ENCODE measurements at regions of chr19 and their contacts with region 1.

Region 1: DNA sequence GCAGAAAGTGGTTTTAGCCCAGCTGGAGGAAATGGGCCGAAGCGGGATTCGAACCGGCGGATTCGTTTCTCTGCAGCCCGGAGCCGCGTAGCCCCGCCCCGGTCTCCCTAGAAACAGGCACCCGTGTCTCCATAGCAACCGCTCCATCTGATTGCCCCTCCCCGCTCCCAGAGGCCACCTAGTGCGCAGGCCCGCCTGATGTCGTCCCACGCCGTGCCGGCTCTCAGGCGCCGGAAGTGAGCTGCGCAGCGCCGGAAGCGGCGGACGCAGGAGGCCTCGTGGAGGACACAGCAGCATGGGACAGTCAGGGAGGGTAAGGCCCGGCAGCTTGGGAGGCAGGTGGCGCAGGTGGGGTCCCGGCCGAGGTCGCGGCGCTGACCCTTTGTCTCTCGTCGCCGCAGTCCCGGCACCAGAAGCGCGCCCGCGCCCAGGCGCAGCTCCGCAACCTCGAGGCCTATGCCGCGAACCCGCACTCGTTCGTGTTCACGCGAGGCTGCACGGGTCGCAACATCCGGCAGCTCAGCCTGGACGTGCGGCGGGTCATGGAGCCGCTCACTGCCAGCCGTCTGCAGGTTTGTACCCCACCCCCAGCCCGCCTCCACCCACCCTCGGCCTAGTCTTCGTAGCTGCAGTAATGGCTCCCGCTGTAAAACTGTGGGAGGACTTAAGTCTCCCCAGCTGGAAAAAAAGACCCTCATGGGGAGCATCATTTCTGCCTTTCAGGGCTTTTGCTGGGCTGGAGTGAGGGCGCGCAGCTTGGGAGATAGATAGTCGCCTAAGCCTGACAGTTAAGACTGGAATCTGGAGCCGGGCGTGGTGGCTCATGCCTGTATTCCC is at the start of gene PPAN:
- DNase-seq: peak; percentile 93
- ATAC-seq: peak; percentile 61
- H3K4me3 ChIP-seq: peak within 1 kb of the TSS; percentile 79
- H3K27ac ChIP-seq: peak within 1 kb of the TSS; percentile 100
- H3K4me1 ChIP-seq: peaks cover 54% of the 10 kb centered on the region
- H3K27me3 ChIP-seq: no peaks in the 10 kb centered on the region
- CTCF ChIP-seq: no peak
- EP300 ChIP-seq: no peak
- POLR2A ChIP-seq: peak; percentile 95
- RAD21 ChIP-seq: no peak
- polyA plus RNA-seq, gene PPAN: 2.1 to 7.6 TPM

Region 2: GRCh38 chr19:10061717-10062310 is 44.5 kb before region 1 on chr19:
- CTCF ChIA-PET with region 1: no interaction called
- POLR2A ChIA-PET with region 1: no interaction called
- RAD21 ChIA-PET with region 1: no interaction called
- SMC1A ChIA-PET with region 1: no interaction called
- in situ Hi-C with region 1: no loop called
- intact Hi-C with region 1: no loop called
- DNase-seq: no peak
- ATAC-seq: no peak
- H3K4me3 ChIP-seq: no peak overlapping the region
- H3K27ac ChIP-seq: no peak overlapping the region
- H3K4me1 ChIP-seq: no peaks in the 10 kb centered on the region
- H3K27me3 ChIP-seq: no peaks in the 10 kb centered on the region; a peak in 1 of 4 replicates
- CTCF ChIP-seq: no peak
- EP300 ChIP-seq: no peak
- POLR2A ChIP-seq: no peak
- RAD21 ChIP-seq: no peak

Region 3: DNA sequence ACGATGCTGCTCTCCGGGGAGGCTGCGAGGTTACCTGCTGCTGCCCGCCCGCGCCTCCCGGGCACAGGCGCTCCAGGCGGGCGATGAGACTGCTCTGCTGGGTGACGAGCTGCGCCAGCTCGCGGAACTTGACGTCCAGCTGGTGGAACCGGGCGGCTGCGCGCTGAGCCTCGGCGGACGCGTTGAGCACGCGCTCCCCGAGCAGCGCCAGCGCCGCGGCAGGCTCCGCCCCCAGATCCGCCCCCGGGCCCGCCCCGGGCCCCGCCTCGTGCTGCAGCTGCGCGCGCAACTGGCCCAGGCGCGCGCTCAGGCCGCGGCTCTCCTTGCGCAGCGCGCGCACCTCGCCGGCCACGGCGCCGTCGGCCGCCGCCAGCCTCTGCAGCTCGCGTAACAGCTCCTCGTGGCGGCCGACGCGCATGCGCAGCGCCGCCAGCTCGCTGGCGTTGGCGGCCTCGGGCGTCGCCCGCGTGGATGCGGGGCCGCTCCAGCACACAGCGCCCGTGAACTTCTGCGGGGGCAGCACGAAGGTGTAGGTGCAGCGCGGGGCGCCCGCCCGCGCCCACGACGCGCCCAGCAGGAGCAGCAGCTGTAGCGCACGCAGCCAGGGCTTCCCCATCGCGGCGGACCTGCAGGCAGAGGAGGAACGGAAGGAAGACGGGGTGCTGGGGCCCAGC is 10.2 kb before region 1 on chr19:
- CTCF ChIA-PET with region 1: interaction called, 171 read pairs
- POLR2A ChIA-PET with region 1: interaction called, 58 read pairs
- RAD21 ChIA-PET with region 1: interaction called, 166 read pairs
- SMC1A ChIA-PET with region 1: interaction called, 150 read pairs
- in situ Hi-C with region 1: no loop called
- intact Hi-C with region 1: no loop called
- DNase-seq: no peak
- ATAC-seq: peak; percentile 81
- H3K4me3 ChIP-seq: peak overlapping the region; percentile 21; the same call in 1 of the 2 replicates
- H3K27ac ChIP-seq: peak overlapping the region; percentile 70
- H3K4me1 ChIP-seq: peaks cover 35% of the 10 kb centered on the region
- H3K27me3 ChIP-seq: no peaks in the 10 kb centered on the region
- CTCF ChIP-seq: no peak
- EP300 ChIP-seq: no peak
- POLR2A ChIP-seq: peak; percentile 81
- RAD21 ChIP-seq: no peak

Region 4: DNA sequence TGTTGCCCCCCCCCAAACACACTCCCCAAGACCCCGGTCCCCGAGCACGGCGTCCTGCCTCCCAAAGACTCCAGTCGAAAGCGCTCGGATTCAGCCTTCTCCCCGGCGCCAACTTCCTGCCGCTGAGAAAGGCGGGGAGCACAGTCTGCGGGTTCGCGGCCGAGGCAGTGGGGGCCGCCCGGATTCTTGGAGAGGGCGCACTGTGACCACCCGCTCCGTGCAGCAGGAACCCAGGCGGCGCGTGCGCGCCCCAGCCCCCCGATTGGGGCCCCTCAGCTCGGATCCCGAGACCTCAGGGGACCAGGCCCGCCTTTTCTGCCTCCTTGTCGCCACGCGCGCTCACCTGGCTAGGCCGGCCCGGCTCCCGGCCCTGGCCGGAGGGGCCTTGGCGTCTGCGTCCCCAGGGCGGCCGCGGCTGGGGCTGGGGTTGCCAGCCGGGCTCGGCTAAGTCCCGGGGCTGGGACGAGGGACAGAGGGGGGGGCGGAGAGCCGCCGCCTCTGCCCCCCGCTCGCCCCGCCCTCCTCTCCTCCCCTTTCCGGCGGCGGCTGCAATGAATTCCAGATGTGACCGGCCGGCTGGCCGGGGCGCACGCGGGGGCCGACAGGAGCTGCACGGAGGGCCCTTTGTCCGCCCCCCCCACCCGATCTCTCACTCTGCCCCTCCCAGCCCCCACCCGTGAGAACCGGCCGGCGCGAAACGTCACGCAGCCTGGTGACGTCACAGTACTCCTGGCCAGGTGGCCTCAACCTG is 124.7 kb after region 1 on chr19 and contains the start of gene S1PR2:
- CTCF ChIA-PET with region 1: interaction called, 5 read pairs
- POLR2A ChIA-PET with region 1: interaction called, 43 read pairs
- RAD21 ChIA-PET with region 1: interaction called, 42 read pairs
- SMC1A ChIA-PET with region 1: interaction called, 22 read pairs
- in situ Hi-C with region 1: loop called (anchors 5 kb)
- intact Hi-C with region 1: loop called (anchors 2 kb)
- DNase-seq: no peak
- ATAC-seq: peak; percentile 67
- H3K4me3 ChIP-seq: peak within 1 kb of the TSS; percentile 90
- H3K27ac ChIP-seq: peak within 1 kb of the TSS; percentile 97
- H3K4me1 ChIP-seq: peaks cover 44% of the 10 kb centered on the region
- H3K27me3 ChIP-seq: no peaks in the 10 kb centered on the region
- CTCF ChIP-seq: 0 out of 6 replicates have a peak, but pooled peaks of 1 of the 3 experiments have one; percentile 19
- EP300 ChIP-seq: no peak
- POLR2A ChIP-seq: peak; percentile 81
- RAD21 ChIP-seq: no peak
- polyA plus RNA-seq, gene S1PR2: 4.9 to 9.6 TPM

Region 5: GRCh38 chr19:10238172-10238783 is 132.0 kb after region 1 on chr19:
- CTCF ChIA-PET with region 1: interaction called, 5 read pairs
- POLR2A ChIA-PET with region 1: interaction called, 43 read pairs
- RAD21 ChIA-PET with region 1: interaction called, 42 read pairs
- SMC1A ChIA-PET with region 1: interaction called, 22 read pairs
- in situ Hi-C with region 1: loop called (anchors 5 kb)
- intact Hi-C with region 1: loop called (anchors 2 kb)
- DNase-seq: no peak
- ATAC-seq: peak; percentile 47
- H3K4me3 ChIP-seq: no peak overlapping the region
- H3K27ac ChIP-seq: peak overlapping the region; percentile 54
- H3K4me1 ChIP-seq: peaks cover 57% of the 10 kb centered on the region
- H3K27me3 ChIP-seq: no peaks in the 10 kb centered on the region
- CTCF ChIP-seq: no peak
- EP300 ChIP-seq: no peak
- POLR2A ChIP-seq: no peak
- RAD21 ChIP-seq: no peak

Region 6: GRCh38 chr19:10245189-10245939 is 139.0 kb after region 1 on chr19:
- CTCF ChIA-PET with region 1: interaction called, 39 read pairs
- POLR2A ChIA-PET with region 1: interaction called, 25 read pairs
- RAD21 ChIA-PET with region 1: interaction called, 12 read pairs
- SMC1A ChIA-PET with region 1: interaction called, 10 read pairs
- in situ Hi-C with region 1: no loop called
- intact Hi-C with region 1: no loop called
- DNase-seq: no peak
- ATAC-seq: peak; percentile 74
- H3K4me3 ChIP-seq: no peak overlapping the region
- H3K27ac ChIP-seq: peak overlapping the region; percentile 55
- H3K4me1 ChIP-seq: peaks cover 54% of the 10 kb centered on the region
- H3K27me3 ChIP-seq: no peaks in the 10 kb centered on the region
- CTCF ChIP-seq: no peak
- EP300 ChIP-seq: no peak
- POLR2A ChIP-seq: no peak
- RAD21 ChIP-seq: no peak

Region 7: DNA sequence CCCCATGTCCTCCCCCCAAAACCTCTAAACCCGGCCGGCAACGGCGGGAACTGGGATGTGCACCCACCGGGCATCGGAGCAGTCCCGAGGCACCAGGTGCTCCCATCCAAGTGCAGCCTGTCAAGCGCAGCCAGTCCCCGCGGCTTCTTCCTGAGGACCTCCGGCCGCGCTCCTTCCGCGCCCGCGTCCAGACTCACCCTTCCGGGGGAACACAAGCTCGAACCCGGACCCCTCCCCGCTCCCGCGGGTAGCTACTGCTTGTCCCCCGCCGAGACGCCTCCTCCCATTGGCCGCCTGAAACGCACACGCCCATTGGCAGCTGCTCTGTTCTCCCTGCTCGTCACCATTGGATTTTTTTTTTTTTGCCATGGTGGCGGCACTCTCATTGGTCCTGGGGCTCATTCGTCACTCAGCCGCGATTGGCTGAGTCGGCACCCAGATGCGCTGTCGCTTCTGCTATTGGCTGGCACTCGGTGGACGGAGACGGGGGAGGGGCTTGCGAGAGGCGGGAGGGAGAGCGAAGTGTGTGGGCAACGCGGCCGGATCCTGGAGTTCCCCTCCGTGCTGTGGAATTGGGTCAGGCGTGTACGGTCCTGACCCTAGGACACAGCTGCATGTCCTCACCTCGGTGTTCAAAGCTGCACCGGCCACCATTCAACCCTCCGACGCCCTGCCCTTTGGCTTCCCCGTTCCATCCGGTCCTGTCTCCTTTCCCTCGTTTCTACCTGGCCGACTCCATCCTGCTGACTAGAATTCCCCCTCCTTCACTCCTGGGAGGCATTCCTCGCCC is 274.2 kb after region 1 on chr19 and contains the start of gene TYK2:
- CTCF ChIA-PET with region 1: no interaction called
- POLR2A ChIA-PET with region 1: no interaction called
- RAD21 ChIA-PET with region 1: interaction called, 3 read pairs
- SMC1A ChIA-PET with region 1: no interaction called
- in situ Hi-C with region 1: no loop called
- intact Hi-C with region 1: loop called (anchors 10 kb)
- DNase-seq: peak; percentile 99
- ATAC-seq: peak; percentile 97
- H3K4me3 ChIP-seq: peak within 1 kb of the TSS; percentile 95
- H3K27ac ChIP-seq: peak within 1 kb of the TSS; percentile 87
- H3K4me1 ChIP-seq: peaks cover 10% of the 10 kb centered on the region
- H3K27me3 ChIP-seq: no peaks in the 10 kb centered on the region
- CTCF ChIP-seq: no peak
- EP300 ChIP-seq: peak; percentile 6 to 55; a peak in 3 of 4 replicates
- POLR2A ChIP-seq: peak; percentile 92
- RAD21 ChIP-seq: no peak
- polyA plus RNA-seq, gene TYK2: 36.4 to 66.9 TPM